T-cell (primary cell): ENCODE measurements at regions of chr22 and their contacts with region 1.

Region 1: GRCh38 chr22:30356449-30357235 is at the starts of genes CCDC157 and SF3A1:
- DNase-seq: peak; percentile 69 to 94 (median 84)
- ATAC-seq: peak; percentile 88 to 93 (median 92)
- H3K4me3 ChIP-seq: peak within 1 kb of the TSS; percentile 79 to 97
- H3K4me3 Mint-ChIP-seq: peak within 1 kb of the TSS; percentile 92 to 96 (median 95)
- H3K27ac ChIP-seq: peak within 1 kb of the TSS; percentile 87
- H3K27ac Mint-ChIP-seq: peak within 1 kb of the TSS; percentile 87 to 92
- H3K4me1 ChIP-seq: peaks cover 15 to 55% of the 10 kb centered on the region in 2 experiments
- H3K4me1 Mint-ChIP-seq: peaks cover 51 to 55% (median 54%) of the 10 kb centered on the region in 3 donors
- H3K27me3 ChIP-seq: peaks cover 0 to 3% of the 10 kb centered on the region in 2 experiments
- H3K27me3 Mint-ChIP-seq: peaks cover 0 to 2% of the 10 kb centered on the region in 2 donors
- total RNA-seq, gene CCDC157: 4.6 to 10.9 (median 5.1) TPM
- total RNA-seq, gene SF3A1: 272 to 323 (median 292) TPM

Region 2: GRCh38 chr22:30326706-30327362 is 29.8 kb before region 1 on chr22 and contains the start of gene TBC1D10A:
- CTCF ChIA-PET with region 1: interaction called in 1 of 2 experiments, 10 read pairs
- POLR2A ChIA-PET with region 1: interaction called in 1 of 2 experiments, 6 read pairs
- DNase-seq: peak; percentile 86 to 97 (median 92)
- ATAC-seq: peak; percentile 88 to 94 (median 90)
- H3K4me3 ChIP-seq: peak within 1 kb of the TSS; percentile 70 to 96
- H3K4me3 Mint-ChIP-seq: peak within 1 kb of the TSS; percentile 82 to 91 (median 87)
- H3K27ac ChIP-seq: peak within 1 kb of the TSS; percentile 77
- H3K27ac Mint-ChIP-seq: peak within 1 kb of the TSS; percentile 91
- H3K4me1 ChIP-seq: peaks cover 28 to 53% of the 10 kb centered on the region in 2 experiments
- H3K4me1 Mint-ChIP-seq: peaks cover 45 to 54% (median 52%) of the 10 kb centered on the region in 3 donors
- H3K27me3 ChIP-seq: no peaks in the 10 kb centered on the region
- H3K27me3 Mint-ChIP-seq: no peaks in the 10 kb centered on the region
- total RNA-seq, gene TBC1D10A: 56.2 to 84.3 (median 82.3) TPM

Region 3: DNA sequence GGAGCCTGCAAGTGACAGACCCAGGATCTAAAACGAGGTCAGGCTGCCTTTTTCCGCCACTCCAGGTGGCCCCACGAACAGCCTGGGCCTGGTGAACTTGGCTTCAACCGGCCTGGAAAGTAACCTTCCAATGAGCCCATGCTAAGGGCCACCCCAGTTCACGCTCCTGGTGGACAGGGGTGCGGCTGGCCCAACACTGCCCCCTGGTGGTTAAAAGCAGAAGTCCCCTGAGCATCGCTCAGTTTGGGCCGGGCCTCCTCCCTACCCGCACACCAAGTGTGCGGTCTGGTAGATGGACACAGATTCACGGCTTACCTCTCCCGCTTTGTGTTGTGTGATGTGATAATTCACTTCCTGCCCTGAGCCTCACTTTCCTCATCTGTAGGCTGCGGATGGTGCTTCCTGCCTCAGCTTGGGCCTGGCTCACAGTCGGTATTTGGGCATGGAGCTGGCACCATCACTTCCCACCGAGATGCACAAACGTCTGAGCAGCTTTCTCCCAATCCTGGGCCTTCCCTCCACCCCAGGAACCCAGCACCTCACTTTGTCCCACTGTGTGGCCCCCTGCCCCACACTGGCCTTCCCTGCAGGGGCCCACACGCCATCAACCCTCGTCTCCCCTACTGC is 128.8 kb after region 1 on chr22:
- CTCF ChIA-PET with region 1: no interaction called
- POLR2A ChIA-PET with region 1: no interaction called
- DNase-seq: peak; percentile 37 to 87 (median 70)
- ATAC-seq: peak; percentile 93 to 99 (median 96)
- H3K4me3 ChIP-seq: no peak overlapping the region
- H3K4me3 Mint-ChIP-seq: no peak overlapping the region
- H3K27ac ChIP-seq: no peak overlapping the region
- H3K27ac Mint-ChIP-seq: no peak overlapping the region
- H3K4me1 ChIP-seq: peaks cover 0 to 8% of the 10 kb centered on the region in 2 experiments
- H3K4me1 Mint-ChIP-seq: peaks cover 0 to 7% (median 0%) of the 10 kb centered on the region in 3 donors
- H3K27me3 ChIP-seq: peaks cover 0 to 18% of the 10 kb centered on the region in 2 experiments
- H3K27me3 Mint-ChIP-seq: peaks cover 3 to 7% of the 10 kb centered on the region in 2 donors

Region 4: GRCh38 chr22:31107178-31107893 is 750.7 kb after region 1 on chr22 and contains the start of gene SELENOM:
- CTCF ChIA-PET with region 1: no interaction called
- POLR2A ChIA-PET with region 1: no interaction called
- DNase-seq: peak; percentile 67 to 93 (median 80)
- ATAC-seq: peak; percentile 91 to 94 (median 94)
- H3K4me3 ChIP-seq: peak within 1 kb of the TSS; percentile 79 to 89
- H3K4me3 Mint-ChIP-seq: peak within 1 kb of the TSS; percentile 88 to 98 (median 96)
- H3K27ac ChIP-seq: peak within 1 kb of the TSS; percentile 63
- H3K27ac Mint-ChIP-seq: peak within 1 kb of the TSS; percentile 90 to 93
- H3K4me1 ChIP-seq: peaks cover 7 to 30% of the 10 kb centered on the region in 2 experiments
- H3K4me1 Mint-ChIP-seq: peaks cover 22 to 28% (median 26%) of the 10 kb centered on the region in 3 donors
- H3K27me3 ChIP-seq: no peaks in the 10 kb centered on the region
- H3K27me3 Mint-ChIP-seq: peaks cover 0 to 3% of the 10 kb centered on the region in 2 donors
- total RNA-seq, gene SELENOM: 46.4 to 67.8 (median 53.7) TPM